Left ventricle myocardium superior (tissue), 1 donor: ENCODE measurements at regions of chr6 and their contacts with region 1.

Region 1: GRCh38 chr6:107489636-107490565 is at the start of gene SOBP:
- DNase-seq: peak; percentile 85
- ATAC-seq: peak; percentile 54
- total RNA-seq, gene SOBP: 15.3 TPM

Region 2: DNA sequence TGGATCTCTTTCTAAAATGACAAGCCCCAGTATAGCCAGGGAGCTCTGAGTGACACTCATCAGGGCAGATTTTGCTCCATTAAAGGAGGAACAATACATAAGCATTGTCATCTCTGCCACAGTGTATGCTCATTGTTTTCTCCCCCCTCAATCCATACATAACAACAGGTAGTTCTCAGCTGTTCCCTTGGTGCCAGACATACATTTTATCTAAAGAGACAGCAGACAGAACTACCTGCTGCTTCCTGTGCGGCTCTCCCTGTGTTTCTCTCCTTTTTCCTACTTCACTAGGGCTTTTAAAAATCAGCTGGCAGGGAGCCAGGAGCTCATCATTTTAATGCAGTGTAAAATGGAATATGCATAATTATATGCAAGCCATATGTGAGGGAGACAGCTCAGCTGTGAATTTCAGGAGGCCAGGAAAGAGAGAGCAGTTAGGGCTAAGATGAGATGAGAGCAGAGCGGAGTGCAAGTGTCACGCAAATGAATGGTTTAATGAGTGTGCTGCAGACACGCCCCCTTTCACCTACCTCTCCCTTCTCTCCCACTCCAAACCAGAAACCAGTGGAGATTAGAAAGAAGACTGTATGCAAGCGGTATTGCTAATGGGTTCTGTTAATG is 96.0 kb after region 1 on chr6:
- intact Hi-C with region 1: no loop called
- DNase-seq: no peak
- ATAC-seq: no peak

Region 3: GRCh38 chr6:107657755-107658461 is 168.0 kb after region 1 on chr6:
- intact Hi-C with region 1: loop called (anchors 5 kb)
- DNase-seq: peak; percentile 55
- ATAC-seq: peak; percentile 23